ENCODE measurements at regions of chr14 and their contacts with region 1.

Region 1: GRCh38 chr14:73728717-73729330 is 14.6 kb upstream of the PNMA1 start:
- DNase-seq: peak; percentile 71
- ATAC-seq: peak; percentile 84
- H3K4me3 ChIP-seq: no peak overlapping the region
- H3K27ac ChIP-seq: peak overlapping the region; percentile 66
- H3K4me1 ChIP-seq: peaks cover 70% of the 10 kb centered on the region
- H3K27me3 ChIP-seq: no peaks in the 10 kb centered on the region
- CTCF ChIP-seq: peak; percentile 85

Region 2: GRCh38 chr14:73644531-73645247 is 84.1 kb before region 1 on chr14 and contains the start of gene DNAL1:
- CTCF ChIA-PET with region 1: no interaction called
- POLR2A ChIA-PET with region 1: no interaction called
- in situ Hi-C with region 1: no loop called
- intact Hi-C with region 1: no loop called
- DNase-seq: peak; percentile 59
- ATAC-seq: peak; percentile 100
- H3K4me3 ChIP-seq: peak within 1 kb of the TSS; percentile 85
- H3K27ac ChIP-seq: peak within 1 kb of the TSS; percentile 91
- H3K4me1 ChIP-seq: 0 out of 2 replicates have a peak, but pooled peaks cover 6% of the 10 kb centered on the region
- H3K27me3 ChIP-seq: no peaks in the 10 kb centered on the region
- CTCF ChIP-seq: no peak
- total RNA-seq, gene DNAL1: 15.2 TPM

Region 3: GRCh38 chr14:73759714-73760597 is 31.1 kb after region 1 on chr14:
- CTCF ChIA-PET with region 1: interaction called, 6 read pairs
- POLR2A ChIA-PET with region 1: interaction called, 20 read pairs
- in situ Hi-C with region 1: no loop called
- intact Hi-C with region 1: no loop called
- DNase-seq: peak; percentile 83
- ATAC-seq: peak; percentile 79
- H3K4me3 ChIP-seq: peak overlapping the region; percentile 63 to 68
- H3K27ac ChIP-seq: peak overlapping the region; percentile 98
- H3K4me1 ChIP-seq: peaks cover 71% of the 10 kb centered on the region
- H3K27me3 ChIP-seq: no peaks in the 10 kb centered on the region
- CTCF ChIP-seq: no peak

Region 4: DNA sequence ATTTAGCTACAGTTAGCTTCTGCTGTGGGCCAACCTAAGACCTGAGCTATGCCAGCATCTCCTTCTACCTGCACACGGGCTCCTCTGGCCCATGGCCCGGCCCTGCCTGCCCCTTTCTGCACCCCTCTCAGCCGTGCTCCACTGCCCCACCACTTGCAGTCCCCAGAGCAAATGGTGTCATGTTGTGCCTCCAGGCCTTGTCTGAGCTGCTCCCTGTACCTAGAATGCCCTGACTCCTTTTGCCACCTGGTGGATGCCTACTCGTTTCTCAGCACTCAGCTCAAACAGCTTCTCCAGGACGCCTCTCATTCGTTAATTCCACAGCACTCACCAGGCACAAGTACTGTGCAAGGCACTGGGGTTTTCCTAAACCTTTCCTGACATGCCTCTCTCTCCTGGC is 48.6 kb after region 1 on chr14:
- CTCF ChIA-PET with region 1: interaction called, 13 read pairs
- POLR2A ChIA-PET with region 1: interaction called, 4 read pairs
- in situ Hi-C with region 1: no loop called
- intact Hi-C with region 1: no loop called
- DNase-seq: no peak
- ATAC-seq: peak; percentile 67
- H3K4me3 ChIP-seq: no peak overlapping the region
- H3K27ac ChIP-seq: 0 out of 2 replicates have a peak overlapping the region, but pooled peaks have one; percentile 25
- H3K4me1 ChIP-seq: peaks cover 45% of the 10 kb centered on the region
- H3K27me3 ChIP-seq: no peaks in the 10 kb centered on the region
- CTCF ChIP-seq: no peak